B cell (primary cell): ENCODE measurements at regions of chr3 and their contacts with region 1.

Region 1: GRCh38 chr3:179174316-179174715 is 26.2 kb downstream of the PIK3CA start:
- DNase-seq: peak; percentile 23
- ATAC-seq: peak; percentile 33
- H3K4me3 ChIP-seq: no peak overlapping the region
- H3K4me3 Mint-ChIP-seq: peak overlapping the region; percentile 11
- H3K27ac ChIP-seq: no peak overlapping the region
- H3K27ac Mint-ChIP-seq: no peak overlapping the region
- H3K4me1 ChIP-seq: peaks cover 10 to 20% of the 10 kb centered on the region in 2 donors
- H3K4me1 Mint-ChIP-seq: peaks cover 44% of the 10 kb centered on the region
- H3K27me3 ChIP-seq: no peaks in the 10 kb centered on the region
- H3K27me3 Mint-ChIP-seq: no peaks in the 10 kb centered on the region
- CTCF ChIP-seq: no peak

Region 2: GRCh38 chr3:178803027-178803693 is 371.2 kb before region 1 on chr3:
- CTCF ChIA-PET with region 1: no interaction called
- POLR2A ChIA-PET with region 1: no interaction called
- intact Hi-C with region 1: no loop called
- DNase-seq: no peak
- ATAC-seq: no peak
- H3K4me3 ChIP-seq: no peak overlapping the region
- H3K4me3 Mint-ChIP-seq: no peak overlapping the region
- H3K27ac ChIP-seq: no peak overlapping the region
- H3K27ac Mint-ChIP-seq: no peak overlapping the region
- H3K4me1 ChIP-seq: no peaks in the 10 kb centered on the region
- H3K4me1 Mint-ChIP-seq: no peaks in the 10 kb centered on the region
- H3K27me3 ChIP-seq: no peaks in the 10 kb centered on the region
- H3K27me3 Mint-ChIP-seq: no peaks in the 10 kb centered on the region
- CTCF ChIP-seq: no peak

Region 3: DNA sequence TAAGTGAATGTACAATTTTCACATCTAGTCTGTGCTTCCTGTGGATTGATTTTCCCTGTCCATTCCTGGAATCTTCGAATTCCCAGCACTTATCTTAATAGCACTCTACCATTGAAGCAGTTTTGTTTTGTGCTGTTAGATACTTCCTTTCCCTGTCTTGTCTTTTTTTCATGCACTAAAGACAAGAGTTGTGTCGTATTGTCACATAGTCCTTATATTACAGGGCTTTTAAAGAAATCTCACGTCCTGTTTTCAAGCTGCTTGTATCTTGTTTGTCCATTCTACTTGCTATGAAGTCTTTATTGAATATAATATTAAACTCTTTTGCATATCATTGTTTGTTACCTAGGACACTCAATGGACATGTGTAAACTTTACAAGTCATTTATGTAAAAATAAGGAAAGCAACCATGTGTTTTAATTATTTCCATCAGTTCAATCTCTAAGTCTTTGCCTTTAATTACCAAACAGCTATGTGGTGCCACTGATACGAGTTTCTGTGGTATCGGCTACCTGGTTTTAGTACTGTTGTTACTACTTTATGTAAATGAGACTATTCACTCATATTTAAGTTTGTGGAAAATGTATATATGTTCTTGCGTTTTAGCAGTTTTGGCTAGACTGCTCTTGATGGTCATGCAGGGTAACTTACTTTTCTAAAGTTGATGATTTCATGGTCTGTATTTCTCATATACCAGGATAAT is 15.8 kb before region 1 on chr3:
- CTCF ChIA-PET with region 1: interaction called, 3 read pairs
- POLR2A ChIA-PET with region 1: interaction called, 5 read pairs
- intact Hi-C with region 1: loop called (anchors 2 kb)
- DNase-seq: no peak
- ATAC-seq: no peak
- H3K4me3 ChIP-seq: no peak overlapping the region
- H3K4me3 Mint-ChIP-seq: peak overlapping the region; percentile 13
- H3K27ac ChIP-seq: no peak overlapping the region
- H3K27ac Mint-ChIP-seq: no peak overlapping the region
- H3K4me1 ChIP-seq: peaks cover 10 to 23% of the 10 kb centered on the region in 2 donors
- H3K4me1 Mint-ChIP-seq: peaks cover 62% of the 10 kb centered on the region
- H3K27me3 ChIP-seq: no peaks in the 10 kb centered on the region
- H3K27me3 Mint-ChIP-seq: no peaks in the 10 kb centered on the region
- CTCF ChIP-seq: no peak

Region 4: DNA sequence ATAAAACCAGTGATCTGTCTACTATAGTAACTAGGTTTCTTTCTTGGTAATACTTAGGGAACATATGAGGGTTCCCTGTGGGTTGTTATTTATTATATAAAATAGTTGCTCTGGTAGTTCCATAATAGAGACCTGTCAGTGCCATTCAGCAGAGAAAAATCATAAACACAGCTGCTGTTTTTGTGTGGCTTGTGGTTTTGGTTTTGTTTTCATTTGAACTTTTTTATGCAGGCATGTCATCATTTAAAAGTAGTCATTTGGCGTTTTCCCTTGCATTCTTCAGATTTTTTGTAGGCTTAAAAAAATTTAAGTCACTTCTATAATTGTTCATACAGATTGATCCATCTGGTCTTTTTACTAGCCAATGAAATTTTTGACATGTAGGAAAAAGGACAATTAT is 21.8 kb after region 1 on chr3:
- CTCF ChIA-PET with region 1: no interaction called
- POLR2A ChIA-PET with region 1: interaction called, 4 read pairs
- intact Hi-C with region 1: loop called (anchors 2 kb)
- DNase-seq: peak; percentile 35
- ATAC-seq: peak; percentile 49
- H3K4me3 ChIP-seq: no peak overlapping the region
- H3K4me3 Mint-ChIP-seq: peak overlapping the region; percentile 51
- H3K27ac ChIP-seq: peak overlapping the region in 1 of 2 donors; percentile 46
- H3K27ac Mint-ChIP-seq: peak overlapping the region; percentile 72
- H3K4me1 ChIP-seq: peaks cover 17 to 29% of the 10 kb centered on the region in 2 donors
- H3K4me1 Mint-ChIP-seq: peaks cover 45% of the 10 kb centered on the region
- H3K27me3 ChIP-seq: no peaks in the 10 kb centered on the region
- H3K27me3 Mint-ChIP-seq: no peaks in the 10 kb centered on the region
- CTCF ChIP-seq: no peak

Region 5: DNA sequence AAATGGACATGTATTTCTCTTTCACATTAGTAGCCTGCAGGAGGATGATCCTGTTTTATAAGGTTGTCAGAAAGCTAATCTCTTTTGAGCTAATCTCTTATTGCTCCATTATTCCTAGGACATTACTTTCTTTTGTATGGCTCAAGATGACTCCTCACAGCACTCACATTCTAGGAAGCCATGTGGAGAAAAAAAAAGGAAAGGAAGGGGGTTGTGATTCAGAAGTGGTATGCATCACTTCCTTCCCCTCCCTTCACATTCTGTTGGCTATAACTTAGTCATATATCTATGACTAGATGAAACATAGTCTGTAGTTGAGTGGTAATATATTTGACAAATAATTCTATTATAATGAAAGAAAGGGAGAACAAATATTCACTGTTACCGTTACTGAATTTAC is 1258.8 kb after region 1 on chr3:
- CTCF ChIA-PET with region 1: no interaction called
- POLR2A ChIA-PET with region 1: no interaction called
- intact Hi-C with region 1: no loop called
- DNase-seq: no peak
- ATAC-seq: no peak
- H3K4me3 ChIP-seq: no peak overlapping the region
- H3K4me3 Mint-ChIP-seq: no peak overlapping the region
- H3K27ac ChIP-seq: no peak overlapping the region
- H3K27ac Mint-ChIP-seq: no peak overlapping the region
- H3K4me1 ChIP-seq: no peaks in the 10 kb centered on the region
- H3K4me1 Mint-ChIP-seq: no peaks in the 10 kb centered on the region
- H3K27me3 ChIP-seq: no peaks in the 10 kb centered on the region
- H3K27me3 Mint-ChIP-seq: no peaks in the 10 kb centered on the region
- CTCF ChIP-seq: no peak